PC-9 (cell line): ENCODE measurements at regions of chr3 and their contacts with region 1.

Region 1: GRCh38 chr3:125083776-125084175 is 28.0 kb upstream of the HEG1 start:
- DNase-seq: no peak
- H3K4me3 ChIP-seq: no peak overlapping the region
- H3K27ac ChIP-seq: no peak overlapping the region
- H3K4me1 ChIP-seq: peaks cover 20% of the 10 kb centered on the region
- H3K27me3 ChIP-seq: no peaks in the 10 kb centered on the region
- CTCF ChIP-seq: no peak

Region 2: DNA sequence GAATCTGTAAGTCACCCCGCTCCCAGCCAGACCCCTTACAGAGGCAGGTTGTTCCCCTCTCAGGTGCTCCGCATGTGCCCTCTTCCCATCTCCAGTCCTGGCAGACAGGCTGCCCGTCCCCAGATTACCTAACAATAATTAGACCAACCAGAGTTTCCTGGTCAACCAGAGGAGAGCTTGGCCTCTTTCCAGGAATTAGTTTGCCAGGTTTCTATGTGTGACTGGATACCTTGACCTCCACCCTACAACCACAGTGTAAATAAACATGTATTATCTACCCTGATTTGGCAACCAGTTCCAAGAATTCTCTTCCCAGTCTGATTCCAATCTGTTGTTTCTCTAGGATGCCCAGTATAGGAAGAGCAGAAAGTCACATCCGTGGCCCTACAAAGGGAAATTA is 531.5 kb before region 1 on chr3:
- CTCF ChIA-PET with region 1: no interaction called
- POLR2A ChIA-PET with region 1: interaction called, 10 read pairs
- intact Hi-C with region 1: no loop called
- DNase-seq: peak; percentile 78 to 85
- H3K4me3 ChIP-seq: no peak overlapping the region
- H3K27ac ChIP-seq: no peak overlapping the region
- H3K4me1 ChIP-seq: peaks cover 14% of the 10 kb centered on the region; the same call in 1 of the 2 replicates
- H3K27me3 ChIP-seq: peaks cover 41% of the 10 kb centered on the region
- CTCF ChIP-seq: no peak

Region 3: DNA sequence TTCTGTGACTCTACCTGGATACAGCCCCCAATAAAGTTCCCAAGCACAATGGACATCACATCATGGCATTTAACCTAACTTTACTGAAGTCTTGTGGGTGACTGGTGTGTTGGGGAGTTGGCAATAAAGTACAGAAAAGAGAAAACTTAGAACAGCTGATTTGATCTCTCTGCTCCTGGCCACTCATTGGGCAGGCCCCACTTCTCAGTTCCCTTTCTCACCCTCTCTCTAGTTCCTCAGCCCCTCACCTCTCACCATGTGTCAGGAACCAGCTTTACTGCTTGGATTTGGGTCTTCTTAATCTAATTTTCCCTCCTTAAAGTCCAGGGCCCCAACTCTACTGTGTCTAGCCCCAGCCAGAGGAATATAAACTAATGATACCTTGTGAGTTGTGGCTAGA is 148.5 kb before region 1 on chr3:
- CTCF ChIA-PET with region 1: no interaction called
- POLR2A ChIA-PET with region 1: no interaction called
- intact Hi-C with region 1: no loop called
- DNase-seq: no peak
- H3K4me3 ChIP-seq: no peak overlapping the region
- H3K27ac ChIP-seq: no peak overlapping the region
- H3K4me1 ChIP-seq: no peaks in the 10 kb centered on the region
- H3K27me3 ChIP-seq: no peaks in the 10 kb centered on the region
- CTCF ChIP-seq: no peak

Region 4: DNA sequence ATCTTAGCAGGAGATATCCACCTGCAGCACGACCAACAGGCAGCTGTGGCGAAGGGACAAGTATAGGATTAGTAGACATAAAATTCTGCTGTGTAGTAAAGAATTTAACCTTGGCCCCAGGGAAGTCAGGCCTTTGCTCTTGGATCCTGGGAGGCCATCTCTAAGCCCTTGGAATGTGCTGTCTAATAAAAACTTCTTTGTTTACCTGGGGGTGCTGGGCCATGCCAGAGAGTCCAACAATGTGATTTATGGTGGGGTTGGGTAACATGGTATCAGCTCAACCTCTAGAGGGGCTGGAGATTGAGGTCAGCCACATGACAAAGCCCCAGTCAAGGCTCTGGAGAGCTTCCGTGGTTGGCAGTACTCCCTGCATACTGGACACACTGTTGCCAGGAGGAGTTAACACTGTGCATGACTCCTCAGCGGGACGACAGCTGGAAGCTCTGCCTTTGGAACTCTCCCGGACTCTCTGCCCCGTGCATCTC is 80.4 kb before region 1 on chr3:
- CTCF ChIA-PET with region 1: interaction called, 16 read pairs
- POLR2A ChIA-PET with region 1: no interaction called
- intact Hi-C with region 1: no loop called
- DNase-seq: peak in 1 of 2 experiments; percentile 63
- H3K4me3 ChIP-seq: no peak overlapping the region
- H3K27ac ChIP-seq: no peak overlapping the region
- H3K4me1 ChIP-seq: 0 out of 2 replicates have a peak, but pooled peaks cover 6% of the 10 kb centered on the region
- H3K27me3 ChIP-seq: no peaks in the 10 kb centered on the region
- CTCF ChIP-seq: no peak

Region 5: DNA sequence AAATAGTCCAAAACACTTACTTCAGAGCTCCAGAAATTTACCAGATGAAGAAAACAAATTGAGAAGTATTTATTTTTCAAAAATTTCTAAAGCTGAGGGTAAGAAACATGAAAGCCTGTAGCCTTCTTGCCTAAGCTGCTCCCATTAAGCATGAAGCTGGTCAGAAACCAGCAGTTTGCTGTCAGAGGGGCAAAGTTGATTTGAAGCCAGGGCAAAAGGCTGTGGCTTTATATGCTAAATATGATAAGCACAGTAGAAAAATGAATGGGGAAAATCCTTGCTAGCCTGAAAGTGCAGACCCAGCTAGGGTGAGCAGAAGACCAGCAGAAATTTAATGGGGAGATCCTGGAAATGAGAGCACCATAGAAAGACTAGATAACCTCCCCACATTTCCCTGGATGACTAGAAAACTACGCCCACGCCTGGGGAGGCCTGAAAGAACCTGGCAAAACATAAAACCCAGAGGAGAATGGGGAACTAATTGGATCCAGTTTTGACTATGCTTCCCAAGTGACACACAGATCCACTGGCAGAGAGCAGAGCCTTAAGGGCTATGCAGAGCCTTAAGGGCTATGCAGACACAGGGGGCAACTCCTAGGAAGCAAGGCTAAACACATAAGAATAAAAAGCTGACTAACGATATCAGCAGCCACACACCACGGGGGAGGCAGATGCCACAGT is 15.0 kb after region 1 on chr3:
- CTCF ChIA-PET with region 1: no interaction called
- POLR2A ChIA-PET with region 1: no interaction called
- intact Hi-C with region 1: loop called (anchors 2 kb)
- DNase-seq: no peak
- H3K4me3 ChIP-seq: no peak overlapping the region
- H3K27ac ChIP-seq: no peak overlapping the region
- H3K4me1 ChIP-seq: no peaks in the 10 kb centered on the region
- H3K27me3 ChIP-seq: no peaks in the 10 kb centered on the region
- CTCF ChIP-seq: no peak

Region 6: GRCh38 chr3:125116311-125117080 is 32.7 kb after region 1 on chr3:
- CTCF ChIA-PET with region 1: interaction called, 3 read pairs
- POLR2A ChIA-PET with region 1: interaction called, 11 read pairs
- intact Hi-C with region 1: loop called (anchors 2 kb)
- DNase-seq: peak; percentile 77 to 84
- H3K4me3 ChIP-seq: no peak overlapping the region
- H3K27ac ChIP-seq: peak overlapping the region; percentile 81
- H3K4me1 ChIP-seq: peaks cover 26% of the 10 kb centered on the region
- H3K27me3 ChIP-seq: no peaks in the 10 kb centered on the region
- CTCF ChIP-seq: no peak

Region 7: DNA sequence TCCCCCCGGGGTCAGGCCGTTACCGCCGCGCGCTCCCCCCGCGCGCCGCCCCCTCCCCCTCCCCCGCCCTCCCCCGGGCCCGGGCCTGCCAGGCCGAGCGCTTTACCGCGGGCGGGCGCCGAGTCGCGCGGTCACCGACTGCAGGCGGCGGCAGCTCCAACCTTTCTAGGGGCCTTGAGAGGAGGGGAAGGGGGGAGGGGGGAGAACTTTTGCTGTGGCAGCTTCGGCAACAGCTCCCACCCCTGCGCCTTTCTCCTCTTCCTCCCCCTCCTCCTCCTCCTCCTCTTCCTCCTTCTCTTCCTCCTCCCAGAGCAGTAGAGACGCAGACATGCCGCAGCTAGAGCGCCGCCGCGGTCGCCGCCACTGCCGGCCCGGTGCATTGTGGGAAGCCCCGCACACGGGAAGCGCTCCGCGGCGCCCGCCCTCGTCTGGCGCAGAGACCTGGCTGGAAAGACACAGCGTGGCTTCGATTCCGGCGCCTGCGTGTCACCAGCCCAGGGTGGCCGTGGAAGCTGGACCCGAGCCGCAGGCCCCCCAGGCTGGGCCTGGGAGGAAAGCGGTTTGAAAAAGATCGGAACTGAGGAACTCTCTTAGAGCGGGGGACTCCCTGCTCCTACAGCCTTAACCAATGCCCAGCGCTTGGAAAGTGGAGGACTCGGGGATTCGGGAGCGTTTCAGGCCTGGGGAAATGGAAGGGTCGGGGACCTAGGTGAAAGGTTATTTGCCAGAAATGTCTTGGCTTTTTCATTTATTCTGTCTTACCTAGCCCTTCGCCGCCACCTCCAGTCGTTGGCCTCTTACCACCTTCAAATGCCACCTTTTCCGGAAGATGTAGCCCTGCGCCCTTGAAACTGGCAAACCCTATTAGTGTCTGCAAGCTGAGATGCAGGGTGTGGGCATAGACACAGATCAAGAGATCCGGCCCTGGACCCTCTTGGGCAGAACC is 291.5 kb after region 1 on chr3 and contains the start of gene ZNF148:
- CTCF ChIA-PET with region 1: no interaction called
- POLR2A ChIA-PET with region 1: interaction called, 17 read pairs
- intact Hi-C with region 1: no loop called
- DNase-seq: peak; percentile 76 to 94
- H3K4me3 ChIP-seq: peak within 1 kb of the TSS; percentile 75
- H3K27ac ChIP-seq: peak within 1 kb of the TSS; percentile 64
- H3K4me1 ChIP-seq: peaks cover 19% of the 10 kb centered on the region
- H3K27me3 ChIP-seq: no peaks in the 10 kb centered on the region
- CTCF ChIP-seq: no peak
- total RNA-seq, gene ZNF148: 53.8 and 62.6 TPM in 2 replicates

Region 8: GRCh38 chr3:125585595-125586223 is 501.9 kb after region 1 on chr3:
- CTCF ChIA-PET with region 1: no interaction called
- POLR2A ChIA-PET with region 1: interaction called, 21 read pairs
- intact Hi-C with region 1: no loop called
- DNase-seq: peak; percentile 55 to 56
- H3K4me3 ChIP-seq: no peak overlapping the region
- H3K27ac ChIP-seq: no peak overlapping the region
- H3K4me1 ChIP-seq: no peaks in the 10 kb centered on the region
- H3K27me3 ChIP-seq: no peaks in the 10 kb centered on the region
- CTCF ChIP-seq: peak; percentile 84